Activated CD8-positive, alpha-beta T cell treated with anti-CD3 and anti-CD28 coated beads for 36 hours (primary cell): ENCODE measurements at regions of chr11 and their contacts with region 1.

Region 1: GRCh38 chr11:120335908-120336640 is at the start of gene ARHGEF12:
- DNase-seq: peak; percentile 83
- ATAC-seq: peak; percentile 79
- H3K4me3 Mint-ChIP-seq: peak within 1 kb of the TSS; percentile 86
- H3K27ac Mint-ChIP-seq: peak within 1 kb of the TSS; percentile 25
- H3K4me1 Mint-ChIP-seq: peaks cover 35% of the 10 kb centered on the region
- H3K27me3 Mint-ChIP-seq: peaks cover 46% of the 10 kb centered on the region
- CTCF ChIP-seq: no peak
- total RNA-seq, gene ARHGEF12: 9.6 to 10.2 TPM

Region 2: DNA sequence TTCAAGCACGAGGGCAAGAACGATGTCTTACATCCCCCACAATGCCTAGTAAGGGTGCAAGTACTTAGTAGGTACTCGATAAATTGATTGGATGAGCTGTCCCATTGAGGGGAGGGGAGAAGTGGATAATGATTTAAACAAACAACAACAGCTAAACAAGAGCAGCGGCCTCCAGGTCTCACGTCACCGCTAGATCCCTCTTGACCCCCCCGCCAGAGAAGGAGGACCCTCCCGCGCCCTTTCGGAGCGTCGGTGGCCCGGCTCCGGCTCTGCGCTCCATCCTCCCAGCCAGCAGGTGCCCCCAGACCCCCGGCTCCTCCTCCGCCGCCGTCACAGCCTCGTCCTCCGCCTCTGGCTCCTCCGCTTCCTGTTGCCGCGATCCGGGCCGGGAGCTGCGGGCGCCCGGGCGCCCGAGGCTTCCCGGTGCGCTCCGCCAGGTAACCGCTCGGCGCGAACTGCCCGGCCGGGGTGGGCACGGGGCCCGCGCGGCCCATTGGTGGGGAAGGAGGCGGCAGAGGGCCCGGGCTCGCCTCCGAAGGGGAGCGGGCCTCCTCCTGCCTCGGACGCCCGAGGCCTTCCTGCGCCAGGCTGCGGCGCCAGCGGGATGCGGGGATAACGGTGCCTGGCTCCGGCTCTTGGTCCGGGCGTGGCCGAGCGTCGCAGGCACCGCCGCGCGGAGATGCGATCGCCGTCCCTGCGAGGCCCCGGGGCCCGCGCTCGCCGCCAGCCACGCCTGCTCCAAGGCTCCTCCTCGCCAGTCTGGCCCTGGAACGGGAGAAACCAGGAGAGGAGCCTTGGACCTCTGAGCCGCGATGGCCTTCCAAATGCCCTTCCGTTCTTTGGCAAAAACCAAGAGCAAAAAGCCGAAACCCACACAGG is 10.9 kb before region 1 on chr11 and contains the start of gene TLCD5:
- CTCF ChIA-PET with region 1: interaction called, 19 read pairs
- POLR2A ChIA-PET with region 1: no interaction called
- intact Hi-C with region 1: no loop called
- DNase-seq: peak; percentile 53
- ATAC-seq: peak; percentile 80
- H3K4me3 Mint-ChIP-seq: peak within 1 kb of the TSS; percentile 65
- H3K27ac Mint-ChIP-seq: no peak within 1 kb of the TSS
- H3K4me1 Mint-ChIP-seq: peaks cover 20% of the 10 kb centered on the region
- H3K27me3 Mint-ChIP-seq: peaks cover 57% of the 10 kb centered on the region
- CTCF ChIP-seq: no peak
- total RNA-seq, gene TLCD5: 0.36 to 0.83 TPM

Region 3: GRCh38 chr11:120432056-120433018 is 96.3 kb after region 1 on chr11:
- CTCF ChIA-PET with region 1: interaction called, 4 read pairs
- POLR2A ChIA-PET with region 1: interaction called, 3 read pairs
- intact Hi-C with region 1: loop called (anchors 10 kb)
- DNase-seq: peak; percentile 38
- ATAC-seq: peak; percentile 90
- H3K4me3 Mint-ChIP-seq: no peak overlapping the region
- H3K27ac Mint-ChIP-seq: peak overlapping the region; percentile 32
- H3K4me1 Mint-ChIP-seq: peaks cover 15% of the 10 kb centered on the region
- H3K27me3 Mint-ChIP-seq: no peaks in the 10 kb centered on the region
- CTCF ChIP-seq: no peak

Region 4: GRCh38 chr11:120482149-120482548 is 146.1 kb after region 1 on chr11:
- CTCF ChIA-PET with region 1: interaction called, 4 read pairs
- POLR2A ChIA-PET with region 1: no interaction called
- intact Hi-C with region 1: loop called (anchors 10 kb)
- DNase-seq: no peak
- ATAC-seq: no peak
- H3K4me3 Mint-ChIP-seq: no peak overlapping the region
- H3K27ac Mint-ChIP-seq: no peak overlapping the region
- H3K4me1 Mint-ChIP-seq: no peaks in the 10 kb centered on the region
- H3K27me3 Mint-ChIP-seq: no peaks in the 10 kb centered on the region
- CTCF ChIP-seq: no peak

Region 5: GRCh38 chr11:120564573-120565311 is 228.7 kb after region 1 on chr11:
- CTCF ChIA-PET with region 1: no interaction called
- POLR2A ChIA-PET with region 1: no interaction called
- intact Hi-C with region 1: loop called (anchors 5 kb)
- DNase-seq: peak; percentile 71
- ATAC-seq: peak; percentile 74
- H3K4me3 Mint-ChIP-seq: no peak overlapping the region
- H3K27ac Mint-ChIP-seq: no peak overlapping the region
- H3K4me1 Mint-ChIP-seq: peaks cover 12% of the 10 kb centered on the region
- H3K27me3 Mint-ChIP-seq: peaks cover 41% of the 10 kb centered on the region
- CTCF ChIP-seq: no peak

Region 6: GRCh38 chr11:120682866-120683265 is 346.8 kb after region 1 on chr11:
- CTCF ChIA-PET with region 1: interaction called, 16 read pairs
- POLR2A ChIA-PET with region 1: no interaction called
- intact Hi-C with region 1: no loop called
- DNase-seq: no peak
- ATAC-seq: no peak
- H3K4me3 Mint-ChIP-seq: no peak overlapping the region
- H3K27ac Mint-ChIP-seq: no peak overlapping the region
- H3K4me1 Mint-ChIP-seq: no peaks in the 10 kb centered on the region
- H3K27me3 Mint-ChIP-seq: peaks cover 9% of the 10 kb centered on the region
- CTCF ChIP-seq: no peak